Endothelial cell of umbilical vein (primary cell): ENCODE measurements at regions of chr10 and their contacts with region 1.

Region 1: GRCh38 chr10:59625721-59626522 is 83.7 kb downstream of the SLC16A9 start:
- DNase-seq: peak; percentile 67
- H3K4me3 ChIP-seq: no peak overlapping the region
- H3K27ac ChIP-seq: no peak overlapping the region
- H3K4me1 ChIP-seq: no peaks in the 10 kb centered on the region
- H3K27me3 ChIP-seq: peaks cover 4 to 7% of the 10 kb centered on the region in 2 experiments
- CTCF ChIP-seq: peak; percentile 68 to 69
- POLR2A ChIP-seq: no peak

Region 2: GRCh38 chr10:58781873-58782488 is 843.9 kb before region 1 on chr10:
- CTCF ChIA-PET with region 1: interaction called, 10 read pairs
- POLR2A ChIA-PET with region 1: no interaction called
- dilution Hi-C with region 1: no loop called
- intact Hi-C with region 1: loop called (anchors 1 kb)
- DNase-seq: peak; percentile 32
- H3K4me3 ChIP-seq: no peak overlapping the region
- H3K27ac ChIP-seq: no peak overlapping the region
- H3K4me1 ChIP-seq: no peaks in the 10 kb centered on the region
- H3K27me3 ChIP-seq: no peaks in the 10 kb centered on the region
- CTCF ChIP-seq: peak; percentile 25 to 40
- POLR2A ChIP-seq: no peak

Region 3: GRCh38 chr10:59240582-59241183 is 385.2 kb before region 1 on chr10:
- CTCF ChIA-PET with region 1: interaction called, 9 read pairs
- POLR2A ChIA-PET with region 1: no interaction called
- dilution Hi-C with region 1: no loop called
- intact Hi-C with region 1: loop called (anchors 1 kb)
- DNase-seq: peak; percentile 52
- H3K4me3 ChIP-seq: no peak overlapping the region
- H3K27ac ChIP-seq: no peak overlapping the region
- H3K4me1 ChIP-seq: no peaks in the 10 kb centered on the region
- H3K27me3 ChIP-seq: no peaks in the 10 kb centered on the region
- CTCF ChIP-seq: peak; percentile 18 to 22
- POLR2A ChIP-seq: no peak

Region 4: GRCh38 chr10:59830601-59831259 is 204.8 kb after region 1 on chr10:
- CTCF ChIA-PET with region 1: interaction called, 86 read pairs
- POLR2A ChIA-PET with region 1: interaction called, 3 read pairs
- dilution Hi-C with region 1: no loop called
- intact Hi-C with region 1: loop called (anchors 1 kb)
- DNase-seq: peak; percentile 68
- H3K4me3 ChIP-seq: no peak overlapping the region
- H3K27ac ChIP-seq: no peak overlapping the region
- H3K4me1 ChIP-seq: peaks cover 5% of the 10 kb centered on the region
- H3K27me3 ChIP-seq: no peaks in the 10 kb centered on the region
- CTCF ChIP-seq: peak; percentile 74 to 88
- POLR2A ChIP-seq: no peak

Region 5: DNA sequence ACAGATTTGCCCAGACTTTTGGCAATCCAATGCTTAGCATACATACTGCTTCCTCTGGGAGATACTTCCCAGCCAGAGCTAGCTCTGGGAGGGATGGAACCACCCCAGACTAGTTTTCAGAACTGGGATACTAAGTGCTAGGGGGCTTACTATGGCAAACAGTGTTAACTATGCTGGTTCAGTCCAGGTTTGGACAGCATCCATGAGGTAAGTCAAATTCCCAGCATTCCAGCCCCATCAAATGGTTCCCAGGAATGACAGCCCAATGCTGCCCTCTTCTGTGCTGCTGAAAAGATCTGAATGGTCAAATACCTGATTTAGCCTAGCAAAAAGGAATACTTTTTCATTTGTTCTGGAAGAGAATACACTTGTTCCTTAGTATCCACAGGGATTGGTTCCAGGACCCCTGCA is 422.2 kb after region 1 on chr10:
- CTCF ChIA-PET with region 1: interaction called, 18 read pairs
- POLR2A ChIA-PET with region 1: no interaction called
- dilution Hi-C with region 1: no loop called
- intact Hi-C with region 1: loop called (anchors 2 kb)
- DNase-seq: peak; percentile 18
- H3K4me3 ChIP-seq: no peak overlapping the region
- H3K27ac ChIP-seq: no peak overlapping the region
- H3K4me1 ChIP-seq: no peaks in the 10 kb centered on the region
- H3K27me3 ChIP-seq: no peaks in the 10 kb centered on the region
- CTCF ChIP-seq: no peak
- POLR2A ChIP-seq: no peak

Region 6: DNA sequence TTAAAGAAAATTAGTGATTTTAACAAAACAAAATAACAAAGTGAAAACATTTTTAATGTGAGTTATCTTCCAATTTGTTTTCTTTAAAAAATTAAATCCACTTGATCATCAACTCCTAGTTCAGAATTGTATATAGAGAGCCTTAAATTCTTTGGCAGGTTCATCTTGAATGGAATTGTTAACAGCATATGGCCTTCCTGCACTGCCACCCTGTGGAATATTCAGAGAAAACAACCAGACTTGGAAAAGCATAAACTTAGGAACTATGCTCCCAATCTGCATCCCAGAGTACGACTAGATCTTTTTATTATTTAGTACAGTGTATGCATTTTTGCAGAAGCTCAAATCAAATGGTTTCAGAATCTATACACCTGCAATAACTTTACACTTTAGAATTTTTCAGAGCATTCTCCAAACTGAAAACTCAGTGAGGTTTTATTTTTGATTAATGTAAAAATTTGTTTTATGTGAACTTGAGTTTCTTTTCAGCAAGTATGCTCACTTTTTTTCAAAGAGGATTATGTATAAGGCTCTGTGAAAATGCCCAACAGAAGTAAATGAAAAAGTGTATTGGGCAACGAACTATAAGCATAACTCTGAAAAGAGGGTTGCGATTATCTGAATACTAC is 808.6 kb after region 1 on chr10:
- CTCF ChIA-PET with region 1: interaction called, 6 read pairs
- POLR2A ChIA-PET with region 1: no interaction called
- dilution Hi-C with region 1: no loop called
- intact Hi-C with region 1: loop called (anchors 2 kb)
- DNase-seq: peak; percentile 78
- H3K4me3 ChIP-seq: no peak overlapping the region
- H3K27ac ChIP-seq: no peak overlapping the region
- H3K4me1 ChIP-seq: peaks cover 9% of the 10 kb centered on the region
- H3K27me3 ChIP-seq: no peaks in the 10 kb centered on the region
- CTCF ChIP-seq: peak; percentile 38 to 47
- POLR2A ChIP-seq: no peak